Left colon (tissue), 2 donors: ENCODE measurements at regions of chrX and their contacts with region 1.

Region 1: GRCh38 chrX:102950908-102951866 is 14.1 kb downstream of the RAB40AL start:
- DNase-seq: peak in 1 of 2 donors; percentile 59
- ATAC-seq: peak; percentile 50

Region 2: DNA sequence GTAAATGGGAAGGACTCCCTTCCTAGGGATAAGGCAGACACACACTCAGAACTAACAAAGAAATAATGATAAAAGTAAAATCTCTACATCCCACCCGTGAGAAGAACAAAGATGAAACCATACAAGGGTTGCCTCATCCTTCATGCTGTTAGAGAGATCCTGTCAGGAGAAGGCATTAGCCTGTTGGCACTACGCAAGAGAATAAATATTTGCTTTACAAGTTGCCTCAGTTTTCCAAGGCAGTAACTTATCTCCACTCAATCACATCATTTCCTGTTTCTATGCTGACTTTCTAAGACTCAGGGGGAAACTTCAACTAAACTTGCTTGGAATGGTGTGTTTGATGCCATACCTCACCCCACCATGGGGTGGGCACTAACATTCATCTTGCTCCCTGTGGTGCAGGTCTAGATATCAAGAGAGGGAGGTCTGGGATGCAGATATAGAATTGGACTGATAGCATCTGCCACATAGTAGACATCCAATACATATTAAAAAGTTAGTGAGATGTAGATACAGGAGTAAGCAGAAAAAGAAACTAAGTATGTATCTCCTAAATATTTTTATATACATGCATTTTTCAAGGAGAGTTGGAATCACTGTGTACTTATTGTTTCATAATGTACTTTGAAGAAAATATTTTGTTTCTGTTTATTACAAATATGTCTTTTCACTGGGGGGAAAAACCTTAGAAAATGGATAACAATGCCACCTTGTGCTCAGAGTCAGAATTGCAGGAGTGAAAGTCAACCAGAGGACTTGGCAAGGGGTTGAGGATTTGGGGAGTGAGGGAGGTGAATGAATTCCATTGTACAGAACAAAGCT is 206.5 kb after region 1 on chrX:
- intact Hi-C with region 1: loop called in 1 of 2 experiments (anchors 10 kb)
- DNase-seq: peak in 1 of 2 donors; percentile 5
- ATAC-seq: no peak

Region 3: DNA sequence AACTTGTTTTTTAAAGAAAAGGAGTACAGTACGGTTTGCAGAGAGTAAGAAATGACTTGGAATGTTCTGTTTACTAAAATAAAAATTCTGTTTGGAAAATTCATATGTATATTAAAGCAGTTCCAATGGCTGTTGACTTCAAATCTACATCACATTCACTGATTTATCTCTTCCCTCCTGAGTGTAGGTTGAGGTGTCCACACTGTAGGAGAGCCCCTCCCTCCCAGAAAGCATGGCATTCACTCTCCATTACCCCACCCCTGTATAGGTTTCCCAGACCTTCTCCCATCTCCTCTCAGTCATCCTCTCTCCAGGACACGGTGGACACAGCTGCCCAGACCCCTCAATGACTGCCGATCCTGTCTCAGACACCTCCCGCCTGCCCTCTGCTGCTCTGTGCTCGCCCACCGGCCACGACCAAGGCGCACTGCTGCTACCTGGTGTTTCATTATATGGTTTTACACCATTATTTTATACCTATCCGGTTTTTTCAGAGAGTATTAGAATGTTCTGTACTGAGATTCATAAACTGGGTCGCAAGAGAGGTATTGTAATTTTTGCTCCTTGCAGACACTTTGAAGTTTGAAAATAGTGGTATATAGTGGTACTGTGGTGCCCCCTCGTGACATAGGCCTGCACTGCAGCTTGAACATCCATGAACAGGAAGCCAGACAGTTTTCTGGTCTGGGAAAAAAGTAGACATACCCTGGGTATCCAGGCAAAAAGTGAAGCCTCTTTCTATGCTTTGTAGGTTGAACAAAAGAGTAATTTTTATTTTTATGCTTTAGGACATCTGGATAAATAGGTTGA is 225.0 kb after region 1 on chrX:
- intact Hi-C with region 1: loop called in 1 of 2 experiments (anchors 5 kb)
- DNase-seq: peak in 1 of 2 donors; percentile 70
- ATAC-seq: peak; percentile 58

Region 4: GRCh38 chrX:103382877-103383276 is 431.7 kb after region 1 on chrX:
- intact Hi-C with region 1: no loop called
- DNase-seq: no peak
- ATAC-seq: no peak